ENCODE measurements at regions of chr22 and their contacts with region 1.

Region 1: DNA sequence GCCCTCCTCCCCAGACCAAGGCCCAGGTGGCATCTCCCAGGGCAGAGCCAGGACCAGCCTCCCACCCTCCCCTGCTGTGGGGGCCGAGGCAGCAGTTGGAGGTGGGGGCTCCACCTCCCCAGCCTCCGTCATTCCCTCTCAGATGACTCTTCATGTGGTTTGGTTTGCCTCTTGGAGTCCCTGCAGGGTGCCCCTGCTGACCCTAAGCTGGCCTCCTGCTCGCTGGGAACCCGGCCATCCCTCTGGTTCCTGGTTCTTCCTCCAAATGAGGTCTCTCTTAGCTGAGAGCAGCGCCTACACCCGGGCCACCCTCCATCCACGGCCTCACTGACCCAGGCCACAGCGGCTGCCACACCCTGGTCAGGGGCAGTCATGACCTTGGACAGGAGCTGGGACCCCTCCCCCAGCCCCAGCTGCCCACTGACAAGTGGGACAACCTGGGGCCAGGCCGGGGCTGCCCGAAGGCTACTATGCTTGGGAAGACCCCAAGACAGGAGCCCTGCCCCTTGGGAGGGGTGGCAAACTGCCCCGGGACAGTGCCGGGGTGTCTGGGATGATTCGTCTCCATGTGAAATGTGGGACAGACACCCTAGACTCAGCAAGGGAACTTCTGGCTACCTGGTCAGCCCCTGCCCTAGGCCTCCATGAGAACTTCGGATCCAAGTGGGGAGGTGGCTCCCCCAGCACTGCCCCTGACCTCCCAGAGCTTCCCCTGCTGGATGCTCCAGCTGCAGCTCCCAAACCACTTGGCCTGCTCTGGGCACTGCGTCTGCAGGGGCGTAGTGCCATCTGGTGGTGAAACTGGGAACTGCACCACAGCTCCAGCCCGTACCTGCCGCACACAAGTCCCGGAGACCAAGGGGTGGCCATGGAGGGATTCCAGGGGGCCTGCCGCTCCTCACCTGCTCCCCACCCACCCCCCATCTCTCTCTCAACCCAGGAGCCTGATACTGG is 194.5 kb downstream of the IGLL1 start:
- DNase-seq: peak; percentile 77 to 79
- ATAC-seq: peak; percentile 82 to 94
- H3K4me3 ChIP-seq: no peak overlapping the region
- H3K27ac ChIP-seq: no peak overlapping the region; a peak in 1 of 6 replicates
- H3K4me1 ChIP-seq: no peaks in the 10 kb centered on the region
- CTCF ChIP-seq: peak; percentile 74
- EP300 ChIP-seq: no peak
- POLR2A ChIP-seq: no peak
- RAD21 ChIP-seq: peak; percentile 82 to 89

Region 2: GRCh38 chr22:23315341-23315917 is 70.1 kb before region 1 on chr22:
- CTCF ChIA-PET with region 1: interaction called, 26 read pairs
- POLR2A ChIA-PET with region 1: no interaction called
- DNase-seq: peak; percentile 13 to 61
- ATAC-seq: peak; percentile 56 to 92; a peak in 5 of 6 replicates
- H3K4me3 ChIP-seq: no peak overlapping the region
- H3K27ac ChIP-seq: 0 out of 6 replicates have a peak overlapping the region, but pooled peaks of 1 of the 2 experiments have one; percentile 53
- H3K4me1 ChIP-seq: no peaks in the 10 kb centered on the region
- CTCF ChIP-seq: peak; percentile 54
- EP300 ChIP-seq: no peak
- POLR2A ChIP-seq: no peak
- RAD21 ChIP-seq: peak; percentile 71 to 76

Region 3: DNA sequence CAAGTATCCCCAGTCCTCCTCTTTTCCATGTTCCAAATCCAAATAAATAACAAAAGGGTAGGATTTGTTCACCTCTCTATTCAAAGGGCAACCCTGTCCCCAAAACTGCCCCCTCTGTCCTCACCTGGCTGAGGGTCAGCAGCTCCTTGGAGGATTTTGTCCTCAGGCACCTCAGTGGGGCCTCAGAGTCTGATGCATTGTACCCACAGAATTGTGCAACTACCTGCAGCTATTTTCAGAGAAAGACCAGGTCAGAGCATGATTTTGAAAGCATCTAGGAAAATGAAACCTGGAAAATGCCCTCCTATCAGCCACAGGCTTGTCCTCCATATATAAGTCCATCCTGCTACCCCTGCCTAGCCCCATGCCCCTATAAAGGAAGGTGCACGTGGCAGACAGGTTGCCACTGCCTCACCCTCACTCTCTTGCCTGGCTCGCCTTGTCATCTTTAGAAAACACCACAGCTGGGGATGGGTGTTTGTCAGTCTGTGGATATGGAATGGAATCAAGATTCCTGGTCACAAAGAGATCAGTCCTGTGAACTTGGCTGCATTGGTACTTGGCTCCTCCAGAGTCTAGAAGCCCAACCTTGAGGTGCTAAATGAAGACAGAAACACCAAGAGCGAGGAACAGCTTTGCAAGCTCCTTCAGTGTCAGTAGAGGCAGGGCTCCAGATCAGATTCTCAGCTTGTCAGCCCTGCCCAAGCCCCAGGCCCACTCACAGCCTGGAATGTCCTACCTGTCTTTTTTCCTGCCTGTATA is 16.7 kb before region 1 on chr22:
- CTCF ChIA-PET with region 1: interaction called, 16 read pairs
- POLR2A ChIA-PET with region 1: no interaction called
- DNase-seq: no peak
- ATAC-seq: no peak
- H3K4me3 ChIP-seq: no peak overlapping the region
- H3K27ac ChIP-seq: no peak overlapping the region
- H3K4me1 ChIP-seq: no peaks in the 10 kb centered on the region
- CTCF ChIP-seq: no peak
- EP300 ChIP-seq: no peak
- POLR2A ChIP-seq: no peak
- RAD21 ChIP-seq: no peak

Region 4: GRCh38 chr22:23395530-23396361 is 10.2 kb after region 1 on chr22:
- CTCF ChIA-PET with region 1: interaction called, 14 read pairs
- POLR2A ChIA-PET with region 1: no interaction called
- DNase-seq: no peak
- ATAC-seq: no peak
- H3K4me3 ChIP-seq: no peak overlapping the region
- H3K27ac ChIP-seq: no peak overlapping the region
- H3K4me1 ChIP-seq: no peaks in the 10 kb centered on the region
- CTCF ChIP-seq: no peak
- EP300 ChIP-seq: no peak
- POLR2A ChIP-seq: no peak
- RAD21 ChIP-seq: no peak

Measured in A549 (cell line).